Endothelial cell of umbilical vein (primary cell): ENCODE measurements at regions of chr5 and their contacts with region 1.

Region 1: GRCh38 chr5:170225326-170226128 is 7.3 kb upstream of the C5orf58 start:
- DNase-seq: peak; percentile 64
- H3K4me3 ChIP-seq: no peak overlapping the region
- H3K27ac ChIP-seq: peak overlapping the region; percentile 23
- H3K4me1 ChIP-seq: peaks cover 45% of the 10 kb centered on the region
- H3K27me3 ChIP-seq: peaks cover 0 to 3% of the 10 kb centered on the region in 2 experiments
- CTCF ChIP-seq: peak; percentile 64 to 74
- POLR2A ChIP-seq: no peak

Region 2: DNA sequence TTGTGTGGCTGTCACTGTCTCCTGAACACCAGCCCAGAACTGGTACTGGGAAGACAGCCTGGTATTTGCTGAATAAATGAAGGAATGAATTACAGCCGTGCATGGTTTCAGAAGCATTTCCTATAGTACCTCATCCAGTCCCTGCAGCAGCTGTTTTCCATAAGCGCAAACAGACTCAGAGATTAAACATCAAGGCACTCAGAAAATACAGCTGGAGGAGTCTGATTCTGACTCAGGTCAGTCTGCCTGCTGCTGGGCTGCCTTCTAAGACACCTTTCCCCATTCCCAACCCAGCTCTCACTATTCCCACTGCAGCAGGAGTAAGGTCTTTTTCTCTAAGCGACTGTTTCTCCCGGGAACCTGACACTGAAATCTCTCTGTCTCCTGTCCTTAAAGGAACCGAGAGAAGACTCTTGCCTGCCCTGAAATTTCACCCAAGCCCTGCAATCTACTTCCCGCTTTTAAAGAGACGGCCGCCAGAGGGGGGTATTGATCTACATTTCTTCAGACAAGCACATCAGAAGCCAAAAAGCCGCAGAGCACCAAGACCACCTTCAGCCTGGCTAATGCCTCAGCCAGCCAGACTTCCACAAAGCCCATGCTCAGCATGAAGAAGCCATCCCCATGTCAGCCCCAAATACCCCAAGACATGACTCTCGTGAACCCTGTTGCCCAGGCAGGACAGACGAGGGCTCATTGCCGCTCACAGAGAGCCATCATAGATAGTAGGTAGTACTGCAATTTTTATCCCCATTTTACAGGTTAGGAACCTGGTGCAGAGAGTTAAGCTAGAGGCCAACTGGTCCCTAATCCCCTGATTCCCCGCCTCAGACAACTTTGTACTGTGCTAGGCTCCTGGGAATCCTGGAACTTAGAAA is 125.2 kb before region 1 on chr5:
- CTCF ChIA-PET with region 1: interaction called, 173 read pairs
- POLR2A ChIA-PET with region 1: no interaction called
- dilution Hi-C with region 1: no loop called
- intact Hi-C with region 1: no loop called
- DNase-seq: peak; percentile 80
- H3K4me3 ChIP-seq: no peak overlapping the region
- H3K27ac ChIP-seq: no peak overlapping the region
- H3K4me1 ChIP-seq: peaks cover 19% of the 10 kb centered on the region
- H3K27me3 ChIP-seq: no peaks in the 10 kb centered on the region
- CTCF ChIP-seq: peak; percentile 63 to 71
- POLR2A ChIP-seq: no peak

Region 3: GRCh38 chr5:170235876-170236864 is 10.6 kb after region 1 on chr5:
- CTCF ChIA-PET with region 1: interaction called, 14 read pairs
- POLR2A ChIA-PET with region 1: no interaction called
- dilution Hi-C with region 1: no loop called
- intact Hi-C with region 1: no loop called
- DNase-seq: no peak
- H3K4me3 ChIP-seq: no peak overlapping the region
- H3K27ac ChIP-seq: no peak overlapping the region
- H3K4me1 ChIP-seq: no peaks in the 10 kb centered on the region
- H3K27me3 ChIP-seq: peaks cover 7 to 13% of the 10 kb centered on the region in 2 experiments
- CTCF ChIP-seq: no peak
- POLR2A ChIP-seq: no peak

Region 4: GRCh38 chr5:170348137-170348633 is 122.7 kb after region 1 on chr5:
- CTCF ChIA-PET with region 1: interaction called, 23 read pairs
- POLR2A ChIA-PET with region 1: no interaction called
- dilution Hi-C with region 1: no loop called
- intact Hi-C with region 1: loop called (anchors 1 kb)
- DNase-seq: no peak
- H3K4me3 ChIP-seq: no peak overlapping the region
- H3K27ac ChIP-seq: no peak overlapping the region
- H3K4me1 ChIP-seq: no peaks in the 10 kb centered on the region
- H3K27me3 ChIP-seq: peaks cover 6 to 16% of the 10 kb centered on the region in 2 experiments
- CTCF ChIP-seq: no peak
- POLR2A ChIP-seq: no peak

Region 5: DNA sequence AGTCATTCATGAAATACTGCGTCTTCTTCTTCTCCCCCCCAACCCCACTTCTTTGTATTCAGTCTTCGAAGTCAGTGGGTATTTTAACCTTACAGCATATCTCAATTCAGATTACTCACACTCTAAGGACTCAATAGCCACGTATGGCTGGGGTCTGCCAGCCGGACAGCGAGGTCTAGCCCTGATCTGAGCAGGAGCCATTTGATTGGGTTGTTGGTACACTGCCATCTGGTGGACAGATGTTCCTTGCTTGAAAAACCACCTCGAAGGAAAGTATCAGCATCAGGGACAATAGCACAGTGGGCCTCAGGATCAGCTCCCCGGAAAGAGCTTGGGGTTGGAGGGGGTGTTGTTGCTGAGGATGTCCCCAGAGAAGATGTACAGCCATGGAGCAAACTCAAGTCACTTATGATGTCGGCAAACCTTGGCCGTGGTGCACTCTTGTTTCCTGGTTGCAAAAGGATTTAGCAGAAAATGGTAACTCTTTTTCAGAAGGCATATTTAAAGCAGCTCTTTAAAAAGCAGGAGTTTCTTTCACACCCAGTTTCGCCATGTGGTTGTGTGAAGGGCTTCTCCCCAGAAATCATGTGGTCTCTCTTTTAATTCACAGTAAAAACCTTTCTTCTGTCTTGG is 195.4 kb after region 1 on chr5:
- CTCF ChIA-PET with region 1: interaction called, 140 read pairs
- POLR2A ChIA-PET with region 1: no interaction called
- dilution Hi-C with region 1: no loop called
- intact Hi-C with region 1: loop called (anchors 1 kb)
- DNase-seq: peak; percentile 68
- H3K4me3 ChIP-seq: no peak overlapping the region
- H3K27ac ChIP-seq: no peak overlapping the region
- H3K4me1 ChIP-seq: no peaks in the 10 kb centered on the region
- H3K27me3 ChIP-seq: peaks cover 3 to 5% of the 10 kb centered on the region in 2 experiments
- CTCF ChIP-seq: peak; percentile 69 to 70
- POLR2A ChIP-seq: no peak

Region 6: DNA sequence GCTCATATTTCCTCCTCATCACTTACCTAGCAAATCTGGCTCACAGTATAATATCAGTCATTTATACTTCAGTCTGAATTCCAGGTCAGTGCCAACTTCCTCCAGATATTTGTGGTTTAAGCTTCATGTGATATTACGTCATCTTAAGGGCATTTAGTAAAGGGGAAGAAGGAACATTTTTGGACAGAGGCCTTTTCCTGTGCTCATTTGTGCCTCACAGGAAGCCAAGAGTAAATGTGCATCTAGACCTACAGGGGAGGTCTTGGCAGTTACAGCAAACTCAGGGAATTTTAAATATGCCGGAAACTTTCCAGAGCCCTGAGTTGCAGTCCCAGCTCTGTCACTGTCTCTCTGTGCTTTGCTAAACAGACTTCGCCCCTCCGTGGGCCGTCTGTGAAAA is 266.0 kb after region 1 on chr5:
- CTCF ChIA-PET with region 1: no interaction called
- POLR2A ChIA-PET with region 1: no interaction called
- dilution Hi-C with region 1: no loop called
- intact Hi-C with region 1: loop called (anchors 10 kb)
- DNase-seq: peak; percentile 91
- H3K4me3 ChIP-seq: no peak overlapping the region
- H3K27ac ChIP-seq: peak overlapping the region; percentile 75
- H3K4me1 ChIP-seq: peaks cover 15% of the 10 kb centered on the region
- H3K27me3 ChIP-seq: no peaks in the 10 kb centered on the region
- CTCF ChIP-seq: no peak
- POLR2A ChIP-seq: peak; percentile 25

Region 7: GRCh38 chr5:170880084-170880483 is 654.6 kb after region 1 on chr5:
- CTCF ChIA-PET with region 1: no interaction called
- POLR2A ChIA-PET with region 1: no interaction called
- dilution Hi-C with region 1: no loop called
- intact Hi-C with region 1: no loop called
- DNase-seq: no peak
- H3K4me3 ChIP-seq: no peak overlapping the region
- H3K27ac ChIP-seq: no peak overlapping the region
- H3K4me1 ChIP-seq: no peaks in the 10 kb centered on the region
- H3K27me3 ChIP-seq: no peaks in the 10 kb centered on the region
- CTCF ChIP-seq: no peak
- POLR2A ChIP-seq: no peak